Natural killer cell (primary cell): ENCODE measurements at regions of chr14 and their contacts with region 1.

Region 1: DNA sequence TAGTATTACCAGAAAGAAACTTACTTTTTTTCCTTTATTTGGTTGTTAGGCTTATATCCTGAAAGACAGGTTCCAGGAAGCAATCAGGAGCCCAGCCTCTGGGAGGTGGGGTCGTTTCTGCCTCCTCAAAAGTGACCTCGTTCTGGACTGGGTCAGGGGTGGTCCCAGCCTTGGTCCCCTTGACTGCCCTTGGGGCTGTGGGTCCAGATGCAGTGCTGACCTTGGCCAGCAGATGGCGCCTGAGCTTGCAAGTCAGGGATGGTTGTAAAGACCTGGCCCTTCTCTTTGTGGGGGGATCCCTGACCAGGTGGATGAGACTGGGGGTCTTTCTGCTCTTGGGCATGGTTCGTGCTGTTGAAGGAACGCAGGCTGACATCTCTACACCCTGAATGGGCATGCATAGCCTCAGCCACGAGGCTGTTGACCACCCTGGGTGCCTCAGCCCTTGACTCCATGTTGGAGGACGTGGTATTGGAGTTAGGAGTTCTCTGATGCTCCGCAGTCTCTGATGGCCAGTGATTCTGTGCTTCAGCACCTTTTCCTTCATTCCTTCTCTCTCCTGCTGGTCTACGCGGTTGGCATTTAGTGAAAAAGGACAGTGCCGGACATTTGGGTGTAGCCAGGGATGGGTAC is 62.4 kb downstream of the ADCK1 start:
- DNase-seq: peak; percentile 74 to 78
- ATAC-seq: peak; percentile 57 to 84 (median 69)
- H3K4me3 ChIP-seq: no peak overlapping the region
- H3K4me3 Mint-ChIP-seq: no peak overlapping the region
- H3K27ac ChIP-seq: no peak overlapping the region
- H3K27ac Mint-ChIP-seq: no peak overlapping the region
- H3K4me1 ChIP-seq: no peaks in the 10 kb centered on the region
- H3K4me1 Mint-ChIP-seq: no peaks in the 10 kb centered on the region
- H3K27me3 ChIP-seq: no peaks in the 10 kb centered on the region
- H3K27me3 Mint-ChIP-seq: no peaks in the 10 kb centered on the region
- CTCF ChIP-seq: peak; percentile 92

Region 2: GRCh38 chr14:77714926-77715325 is 147.3 kb before region 1 on chr14:
- intact Hi-C with region 1: no loop called
- DNase-seq: no peak
- ATAC-seq: no peak
- H3K4me3 ChIP-seq: no peak overlapping the region
- H3K4me3 Mint-ChIP-seq: no peak overlapping the region
- H3K27ac ChIP-seq: no peak overlapping the region
- H3K27ac Mint-ChIP-seq: peak overlapping the region in 1 of 2 donors; percentile 35
- H3K4me1 ChIP-seq: no peaks in the 10 kb centered on the region
- H3K4me1 Mint-ChIP-seq: peaks cover 2 to 6% of the 10 kb centered on the region in 2 donors
- H3K27me3 ChIP-seq: no peaks in the 10 kb centered on the region
- H3K27me3 Mint-ChIP-seq: no peaks in the 10 kb centered on the region
- CTCF ChIP-seq: no peak

Region 3: GRCh38 chr14:78566026-78566858 is 704.0 kb after region 1 on chr14:
- intact Hi-C with region 1: loop called (anchors 10 kb)
- DNase-seq: peak; percentile 26 to 57
- ATAC-seq: peak; percentile 60 to 92 (median 74)
- H3K4me3 ChIP-seq: no peak overlapping the region
- H3K4me3 Mint-ChIP-seq: peak overlapping the region; percentile 29
- H3K27ac ChIP-seq: no peak overlapping the region
- H3K27ac Mint-ChIP-seq: no peak overlapping the region
- H3K4me1 ChIP-seq: no peaks in the 10 kb centered on the region
- H3K4me1 Mint-ChIP-seq: peaks cover 0 to 4% of the 10 kb centered on the region in 2 donors
- H3K27me3 ChIP-seq: no peaks in the 10 kb centered on the region
- H3K27me3 Mint-ChIP-seq: no peaks in the 10 kb centered on the region
- CTCF ChIP-seq: peak; percentile 33

Region 4: GRCh38 chr14:78598041-78598920 is 736.0 kb after region 1 on chr14:
- intact Hi-C with region 1: loop called (anchors 1 kb)
- DNase-seq: peak in 1 of 2 donors; percentile 58
- ATAC-seq: peak; percentile 52 to 87 (median 67)
- H3K4me3 ChIP-seq: no peak overlapping the region
- H3K4me3 Mint-ChIP-seq: no peak overlapping the region
- H3K27ac ChIP-seq: no peak overlapping the region
- H3K27ac Mint-ChIP-seq: no peak overlapping the region
- H3K4me1 ChIP-seq: no peaks in the 10 kb centered on the region
- H3K4me1 Mint-ChIP-seq: no peaks in the 10 kb centered on the region
- H3K27me3 ChIP-seq: no peaks in the 10 kb centered on the region
- H3K27me3 Mint-ChIP-seq: peaks cover 0 to 5% of the 10 kb centered on the region in 2 donors
- CTCF ChIP-seq: peak; percentile 56